ENCODE measurements at regions of chr11 and their contacts with region 1.

Region 1: DNA sequence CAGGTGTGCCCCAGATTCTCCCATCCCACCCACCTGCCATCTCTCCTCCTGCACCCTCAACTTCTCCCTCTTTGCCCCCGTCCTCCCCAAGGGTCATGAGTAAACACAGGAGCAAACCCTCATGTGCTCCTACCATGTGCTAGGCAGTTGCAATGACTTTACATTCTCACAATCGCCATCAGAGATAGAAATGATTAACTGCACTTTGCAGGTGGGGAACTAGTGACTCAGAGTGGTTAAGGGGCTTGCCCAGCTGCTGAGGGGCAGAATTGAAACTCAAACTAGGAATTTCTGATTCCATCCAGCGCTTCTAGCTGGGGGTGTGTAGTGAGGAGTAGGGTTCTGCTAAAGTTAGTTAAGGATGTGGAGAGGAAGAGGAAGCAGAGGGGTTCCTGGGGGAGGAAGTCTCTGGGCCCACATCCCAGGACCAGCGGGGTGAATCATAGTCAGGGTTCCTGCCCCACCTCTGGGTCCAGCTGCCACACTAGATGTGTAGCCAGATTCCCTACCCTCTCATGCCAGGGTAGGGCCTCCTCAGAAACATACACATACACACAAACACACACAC is 16.0 kb upstream of the PRG2 start:
- DNase-seq: peak in 2 of 14 experiments; percentile 53 to 62
- ATAC-seq: no peak
- H3K4me3 ChIP-seq: no peak overlapping the region
- H3K4me3 Mint-ChIP-seq: no peak overlapping the region
- H3K27ac ChIP-seq: no peak overlapping the region
- H3K27ac Mint-ChIP-seq: no peak overlapping the region
- H3K4me1 ChIP-seq: peaks cover 4% of the 10 kb centered on the region
- H3K4me1 Mint-ChIP-seq: no peaks in the 10 kb centered on the region
- H3K27me3 ChIP-seq: no peaks in the 10 kb centered on the region
- H3K27me3 Mint-ChIP-seq: no peaks in the 10 kb centered on the region
- CTCF ChIP-seq: no peak

Region 2: GRCh38 chr11:57180081-57180561 is 226.3 kb before region 1 on chr11:
- CTCF ChIA-PET with region 1: no interaction called
- POLR2A ChIA-PET with region 1: no interaction called
- intact Hi-C with region 1: no loop called
- DNase-seq: no peak
- ATAC-seq: no peak
- H3K4me3 ChIP-seq: no peak overlapping the region
- H3K4me3 Mint-ChIP-seq: no peak overlapping the region
- H3K27ac ChIP-seq: no peak overlapping the region
- H3K27ac Mint-ChIP-seq: no peak overlapping the region
- H3K4me1 ChIP-seq: no peaks in the 10 kb centered on the region
- H3K4me1 Mint-ChIP-seq: no peaks in the 10 kb centered on the region
- H3K27me3 ChIP-seq: peaks cover 17 to 32% of the 10 kb centered on the region in 2 experiments
- H3K27me3 Mint-ChIP-seq: peaks cover 66% of the 10 kb centered on the region
- CTCF ChIP-seq: no peak

Region 3: GRCh38 chr11:57386178-57386940 is 20.1 kb before region 1 on chr11:
- CTCF ChIA-PET with region 1: no interaction called
- POLR2A ChIA-PET with region 1: no interaction called
- intact Hi-C with region 1: loop called in 1 of 2 experiments (anchors 1 kb)
- DNase-seq: no peak
- ATAC-seq: no peak
- H3K4me3 ChIP-seq: no peak overlapping the region
- H3K4me3 Mint-ChIP-seq: no peak overlapping the region
- H3K27ac ChIP-seq: no peak overlapping the region
- H3K27ac Mint-ChIP-seq: no peak overlapping the region
- H3K4me1 ChIP-seq: no peaks in the 10 kb centered on the region
- H3K4me1 Mint-ChIP-seq: no peaks in the 10 kb centered on the region
- H3K27me3 ChIP-seq: no peaks in the 10 kb centered on the region
- H3K27me3 Mint-ChIP-seq: peaks cover 12% of the 10 kb centered on the region
- CTCF ChIP-seq: no peak